ENCODE measurements at regions of chr3 and their contacts with region 1.

Region 1: GRCh38 chr3:188446014-188446413 is 292.1 kb downstream of the LPP start:
- DNase-seq: peak; percentile 90
- H3K4me3 ChIP-seq: peak overlapping the region; percentile 46
- H3K27ac ChIP-seq: peak overlapping the region; percentile 88
- H3K4me1 ChIP-seq: peaks cover 48% of the 10 kb centered on the region
- CTCF ChIP-seq: no peak

Region 2: DNA sequence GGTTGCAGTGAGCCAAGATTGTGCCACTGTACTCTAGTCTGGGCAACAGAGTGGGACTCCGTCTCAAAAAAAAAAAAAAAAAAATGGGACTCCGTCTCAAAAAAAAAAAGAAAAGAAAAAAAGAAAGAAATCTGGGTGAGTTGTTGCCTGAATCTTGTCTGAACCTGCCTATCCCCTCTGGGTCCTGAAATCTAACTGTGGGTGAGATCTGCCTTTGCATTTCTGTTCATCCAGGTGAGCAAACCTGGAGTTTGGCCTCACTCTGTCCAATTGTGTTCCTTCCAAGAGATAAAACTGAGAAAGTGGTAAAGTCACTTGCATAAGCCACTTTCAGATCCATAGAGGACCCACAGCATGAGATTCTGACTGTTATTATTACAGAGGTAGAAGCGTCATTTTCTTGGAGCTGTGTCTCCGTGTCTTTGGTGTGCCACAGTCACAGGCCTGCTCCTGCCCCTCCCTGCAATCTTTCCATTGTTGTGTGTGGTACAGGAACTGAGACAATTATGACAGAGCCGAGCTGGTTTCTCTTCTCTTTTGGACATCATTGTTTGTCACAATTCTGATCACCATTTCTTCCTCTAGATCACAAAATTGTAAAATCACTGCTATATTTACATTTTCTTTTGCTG is 56.2 kb before region 1 on chr3:
- CTCF ChIA-PET with region 1: no interaction called
- POLR2A ChIA-PET with region 1: interaction called, 3 read pairs
- intact Hi-C with region 1: loop called (anchors 2 kb)
- DNase-seq: peak; percentile 92
- H3K4me3 ChIP-seq: peak overlapping the region; percentile 53
- H3K27ac ChIP-seq: peak overlapping the region; percentile 89
- H3K4me1 ChIP-seq: peaks cover 50% of the 10 kb centered on the region
- CTCF ChIP-seq: no peak

Region 3: GRCh38 chr3:188421836-188422540 is 24.0 kb before region 1 on chr3:
- CTCF ChIA-PET with region 1: no interaction called
- POLR2A ChIA-PET with region 1: interaction called, 10 read pairs
- intact Hi-C with region 1: loop called (anchors 1 kb)
- DNase-seq: peak; percentile 94
- H3K4me3 ChIP-seq: peak overlapping the region; percentile 53
- H3K27ac ChIP-seq: peak overlapping the region; percentile 88
- H3K4me1 ChIP-seq: peaks cover 52% of the 10 kb centered on the region
- CTCF ChIP-seq: no peak

Region 4: GRCh38 chr3:188584162-188584529 is 138.1 kb after region 1 on chr3:
- CTCF ChIA-PET with region 1: no interaction called
- POLR2A ChIA-PET with region 1: no interaction called
- intact Hi-C with region 1: loop called (anchors 5 kb)
- DNase-seq: peak; percentile 14
- H3K4me3 ChIP-seq: peak overlapping the region; percentile 9
- H3K27ac ChIP-seq: no peak overlapping the region
- H3K4me1 ChIP-seq: peaks cover 81% of the 10 kb centered on the region
- CTCF ChIP-seq: no peak

Region 5: GRCh38 chr3:188752850-188753249 is 306.8 kb after region 1 on chr3:
- CTCF ChIA-PET with region 1: no interaction called
- POLR2A ChIA-PET with region 1: interaction called, 5 read pairs
- intact Hi-C with region 1: loop called (anchors 1 kb)
- DNase-seq: peak; percentile 76
- H3K4me3 ChIP-seq: peak overlapping the region; percentile 54
- H3K27ac ChIP-seq: peak overlapping the region; percentile 89
- H3K4me1 ChIP-seq: peaks cover 68% of the 10 kb centered on the region
- CTCF ChIP-seq: no peak